Heart right ventricle (tissue), 16 donors: ENCODE measurements at regions of chr13 and their contacts with region 1.

Region 1: DNA sequence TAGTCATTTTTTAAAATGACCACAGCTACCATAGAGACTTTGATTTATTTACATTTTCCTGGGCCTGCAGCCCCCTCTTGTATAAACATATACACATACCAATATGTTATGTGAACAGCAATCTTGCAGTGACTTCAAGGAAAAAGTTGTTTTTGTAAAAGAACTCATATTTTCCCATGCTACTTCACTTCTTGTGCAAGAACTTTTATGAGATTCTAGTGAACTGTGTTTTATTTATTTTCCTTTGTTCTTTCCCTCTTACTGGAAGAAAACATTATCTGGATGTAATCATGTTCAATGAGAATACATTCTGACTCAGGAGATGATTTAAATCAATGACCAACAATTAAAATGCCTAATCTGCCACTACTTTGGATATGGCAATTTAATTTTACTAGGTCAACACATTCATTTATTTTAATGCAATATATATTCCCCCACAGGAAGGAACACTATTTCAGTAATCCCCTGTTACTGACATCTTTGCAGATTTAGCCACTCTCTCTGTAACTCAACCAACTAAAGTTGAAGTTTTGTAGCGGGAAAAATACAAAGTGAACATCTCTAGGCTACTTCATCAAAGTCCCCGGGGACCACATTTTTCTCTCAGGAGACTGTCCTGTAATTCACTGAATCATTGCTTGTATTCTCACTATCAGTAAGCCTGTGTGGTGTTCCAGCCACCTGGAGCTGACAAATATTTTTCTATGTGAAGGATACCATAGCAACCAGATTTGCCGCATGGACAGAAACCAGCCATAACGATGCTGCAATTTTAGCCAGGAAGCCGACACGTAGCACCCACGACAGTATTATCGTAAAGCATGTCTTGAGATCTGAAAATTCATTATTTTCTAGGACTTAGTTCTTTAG is 90.5 kb downstream of the STARD13 start:
- DNase-seq: peak in 1 of 2 donors; percentile 51
- ATAC-seq: peak in 7 of 8 donors; percentile 8 to 76 (median 49)
- H3K4me3 ChIP-seq: no peak overlapping the region
- H3K27ac ChIP-seq: peak overlapping the region in 8 of 10 donors; percentile 11 to 64 (median 54)
- H3K4me1 ChIP-seq: peaks cover 16 to 97% (median 70%) of the 10 kb centered on the region in 9 donors
- H3K27me3 ChIP-seq: no peaks in the 10 kb centered on the region
- CTCF ChIP-seq: no peak

Region 2: GRCh38 chr13:33033051-33033812 is 161.8 kb before region 1 on chr13:
- intact Hi-C with region 1: loop called in 1 of 10 experiments (anchors 10 kb)
- DNase-seq: no peak
- ATAC-seq: no peak
- H3K4me3 ChIP-seq: peak overlapping the region in 1 of 10 donors; percentile 8
- H3K27ac ChIP-seq: peak overlapping the region in 1 of 10 donors; percentile 64
- H3K4me1 ChIP-seq: peaks cover 0 to 9% (median 0%) of the 10 kb centered on the region in 9 donors
- H3K27me3 ChIP-seq: no peaks in the 10 kb centered on the region
- CTCF ChIP-seq: no peak

Region 3: DNA sequence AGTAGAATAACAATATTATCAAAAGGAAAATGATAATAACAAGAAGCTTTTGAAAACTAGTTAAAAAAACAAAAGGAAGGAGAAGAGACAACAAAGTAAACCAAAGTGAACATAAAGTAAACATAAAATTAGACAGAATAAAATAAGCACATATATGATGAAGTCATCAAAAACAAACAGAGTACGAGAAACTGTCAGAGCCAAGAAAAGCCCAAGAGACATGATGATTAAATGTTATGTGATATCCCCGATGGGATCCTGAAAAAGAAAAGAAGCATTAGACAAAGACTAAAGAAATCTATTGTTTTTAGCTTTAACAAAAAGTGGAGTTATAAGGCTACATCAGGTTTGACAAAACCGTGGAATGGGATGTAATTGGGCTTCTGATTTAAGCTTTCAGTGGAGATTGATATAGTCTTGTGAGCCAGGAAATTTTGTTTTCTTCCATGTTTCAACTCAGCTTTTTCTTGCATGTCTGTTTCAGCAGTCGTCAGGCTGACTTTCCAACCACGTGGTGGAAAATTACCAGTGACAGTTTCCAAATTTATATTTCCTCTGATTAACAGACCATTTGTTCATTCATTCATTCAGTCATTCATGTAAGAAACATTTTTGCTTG is 114.0 kb before region 1 on chr13:
- intact Hi-C with region 1: no loop called
- DNase-seq: no peak
- ATAC-seq: no peak
- H3K4me3 ChIP-seq: no peak overlapping the region
- H3K27ac ChIP-seq: no peak overlapping the region
- H3K4me1 ChIP-seq: peaks cover 0 to 11% (median 0%) of the 10 kb centered on the region in 9 donors
- H3K27me3 ChIP-seq: no peaks in the 10 kb centered on the region
- CTCF ChIP-seq: no peak